Heart left ventricle (tissue), 16 donors: ENCODE measurements at regions of chr16 and their contacts with region 1.

Region 1: GRCh38 chr16:88561485-88562369 is 8.5 kb upstream of the ZC3H18 start:
- DNase-seq: peak in 3 of 5 donors; percentile 29 to 44 (median 43)
- ATAC-seq: peak; percentile 39 to 59 (median 49)
- H3K4me3 ChIP-seq: peak overlapping the region in 7 of 12 donors; percentile 12 to 47 (median 22)
- H3K27ac ChIP-seq: no peak overlapping the region
- H3K4me1 ChIP-seq: peaks cover 0 to 16% (median 4%) of the 10 kb centered on the region in 12 donors
- H3K27me3 ChIP-seq: peaks cover 0 to 31% (median under 1%) of the 10 kb centered on the region in 9 donors
- CTCF ChIP-seq: peak; percentile 44 to 76 (median 62)
- POLR2A ChIP-seq: no peak

Region 2: DNA sequence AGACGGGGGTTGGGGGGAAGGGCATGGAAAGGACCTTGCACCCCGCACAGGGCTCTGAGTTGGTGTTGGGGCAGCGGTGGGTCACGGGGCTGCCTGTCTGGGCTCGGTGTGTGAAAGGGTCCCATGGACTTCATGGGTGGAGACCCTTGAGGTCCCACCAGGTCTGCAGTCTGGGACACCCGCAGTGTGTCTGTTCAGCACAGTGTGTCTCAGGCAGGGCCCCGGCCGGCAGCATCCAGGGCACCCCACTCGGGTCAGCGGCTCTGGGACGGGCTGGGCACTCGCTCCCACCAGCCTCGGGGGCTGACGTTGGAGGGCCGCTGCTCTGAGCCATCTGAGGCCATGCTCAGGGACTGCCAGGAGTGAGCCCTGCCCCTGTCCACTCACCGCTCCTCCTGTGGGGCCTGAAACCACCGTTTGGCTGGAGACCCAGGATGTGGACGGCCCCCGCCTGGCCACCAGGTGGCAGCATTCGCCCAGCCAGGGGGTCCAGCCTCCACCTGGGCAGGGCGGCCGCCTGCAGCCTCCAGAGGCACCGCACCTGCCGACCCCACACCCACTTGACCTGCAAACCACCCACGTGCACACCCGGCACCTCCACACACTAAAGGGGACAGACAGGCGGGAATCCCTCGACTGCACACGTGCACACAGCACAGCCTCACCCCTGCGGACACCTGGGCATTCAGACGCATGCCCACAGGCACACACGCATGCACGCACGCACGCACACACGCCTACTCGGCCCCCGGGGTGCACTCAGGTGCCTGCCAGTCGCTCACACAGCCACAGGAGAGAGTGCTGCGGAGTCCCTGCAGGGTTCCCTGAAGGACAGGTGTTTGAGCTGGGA is 118.8 kb before region 1 on chr16:
- intact Hi-C with region 1: loop called (anchors 1 to 10 kb)
- DNase-seq: peak; percentile 73 to 90 (median 76)
- ATAC-seq: peak; percentile 71 to 89 (median 85)
- H3K4me3 ChIP-seq: no peak overlapping the region
- H3K27ac ChIP-seq: no peak overlapping the region
- H3K4me1 ChIP-seq: peaks cover 0 to 9% (median 0%) of the 10 kb centered on the region in 12 donors
- H3K27me3 ChIP-seq: peaks cover 0 to 15% (median 0%) of the 10 kb centered on the region in 9 donors
- CTCF ChIP-seq: peak; percentile 93 to 98 (median 94)
- POLR2A ChIP-seq: no peak

Region 3: GRCh38 chr16:88452482-88453216 is 109.1 kb before region 1 on chr16:
- intact Hi-C with region 1: loop called in 3 of 10 experiments (anchors 2 to 10 kb)
- DNase-seq: peak; percentile 97 to 99 (median 98)
- ATAC-seq: peak; percentile 87 to 92 (median 92)
- H3K4me3 ChIP-seq: peak overlapping the region; percentile 27 to 85 (median 64)
- H3K27ac ChIP-seq: peak overlapping the region in 11 of 12 donors; percentile 26 to 79 (median 69)
- H3K4me1 ChIP-seq: peaks cover 7 to 45% (median 27%) of the 10 kb centered on the region in 12 donors
- H3K27me3 ChIP-seq: peaks cover 0 to 22% (median 0%) of the 10 kb centered on the region in 9 donors
- CTCF ChIP-seq: no peak
- POLR2A ChIP-seq: no peak